PC-3 (cell line): ENCODE measurements at regions of chr1 and their contacts with region 1.

Region 1: GRCh38 chr1:39196244-39197215 is 8.0 kb upstream of the MACF1 start:
- DNase-seq: peak; percentile 72
- ATAC-seq: peak; percentile 44
- H3K4me3 ChIP-seq: peak overlapping the region; percentile 40; the same call in 1 of the 2 replicates
- H3K27ac ChIP-seq: peak overlapping the region; percentile 65
- H3K4me1 ChIP-seq: peaks cover 50% of the 10 kb centered on the region
- H3K27me3 ChIP-seq: no peaks in the 10 kb centered on the region
- CTCF ChIP-seq: no peak

Region 2: DNA sequence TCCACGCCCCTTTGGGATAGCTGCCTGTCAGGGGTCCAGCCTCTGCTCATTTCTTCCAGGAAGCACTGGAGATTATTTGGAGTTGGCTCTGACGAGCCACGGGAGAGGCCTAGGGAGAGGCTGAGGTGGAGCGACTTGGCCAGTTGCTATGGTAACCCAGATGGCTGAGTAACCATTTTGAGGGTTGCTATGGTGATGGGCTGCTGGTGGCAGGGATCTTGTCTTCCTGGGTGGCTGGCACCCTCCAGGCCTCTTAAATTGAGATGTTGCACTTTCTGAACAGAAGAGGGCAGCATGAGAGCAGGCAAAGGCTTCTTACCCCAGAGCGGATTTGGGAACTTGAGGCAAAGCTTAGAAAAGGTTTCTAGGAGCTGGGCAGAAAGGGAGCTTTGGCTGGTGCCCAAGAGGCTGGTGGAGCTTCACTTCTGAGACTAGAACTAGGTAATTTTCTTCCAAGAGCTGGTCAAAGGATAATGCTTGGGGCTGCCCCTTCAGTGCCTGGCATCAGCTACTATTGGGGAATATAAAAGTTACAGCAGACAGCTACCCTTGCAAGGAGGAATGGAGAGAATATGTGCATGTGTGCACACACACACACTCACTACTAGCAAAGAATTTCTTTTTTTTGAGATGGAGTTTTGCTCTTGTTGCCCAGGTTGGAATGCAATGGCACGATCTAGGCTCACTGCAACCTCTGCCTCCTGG is 97.8 kb before region 1 on chr1:
- CTCF ChIA-PET with region 1: interaction called, 20 read pairs
- POLR2A ChIA-PET with region 1: no interaction called
- intact Hi-C with region 1: loop called (anchors 1 kb)
- DNase-seq: peak; percentile 87
- ATAC-seq: peak; percentile 52
- H3K4me3 ChIP-seq: no peak overlapping the region
- H3K27ac ChIP-seq: no peak overlapping the region
- H3K4me1 ChIP-seq: peaks cover 26% of the 10 kb centered on the region
- H3K27me3 ChIP-seq: no peaks in the 10 kb centered on the region
- CTCF ChIP-seq: peak; percentile 91

Region 3: DNA sequence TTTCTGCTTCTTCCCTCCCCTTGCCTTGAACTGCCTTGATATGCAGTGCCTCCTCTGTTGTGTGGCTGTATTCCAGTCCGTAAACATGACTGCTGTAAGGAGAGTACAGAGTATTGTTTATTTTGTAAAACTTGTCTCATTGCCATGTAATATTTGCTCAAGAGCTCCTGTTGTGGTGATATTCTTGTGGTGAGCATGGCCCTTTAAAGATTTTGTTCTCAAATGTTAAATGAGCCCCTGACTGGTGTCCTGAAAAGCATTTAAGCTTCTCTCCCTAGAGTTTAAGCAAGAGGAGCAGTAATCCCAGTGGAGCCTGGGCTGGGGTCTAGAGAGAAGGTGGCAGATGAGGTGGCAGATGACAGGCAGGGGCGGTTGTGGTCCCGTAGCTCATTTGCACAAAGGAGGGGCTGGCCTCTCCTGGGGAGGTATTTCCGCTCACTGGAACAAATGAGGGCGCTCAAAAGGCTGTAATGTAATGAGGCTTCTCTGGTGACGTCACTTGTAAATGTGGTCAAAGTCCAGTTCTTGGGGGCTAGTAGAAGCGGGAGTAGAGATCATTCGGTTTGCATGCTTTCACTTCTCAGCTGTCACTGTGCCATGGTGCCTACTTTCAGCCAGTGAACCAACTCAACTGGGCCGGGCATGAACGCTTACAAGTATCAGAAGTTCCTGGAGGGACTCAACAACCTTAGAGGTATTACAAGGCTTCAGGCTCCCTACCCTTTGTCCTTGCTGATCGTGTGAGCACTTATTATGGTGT is 38.0 kb before region 1 on chr1:
- CTCF ChIA-PET with region 1: interaction called, 33 read pairs
- POLR2A ChIA-PET with region 1: no interaction called
- intact Hi-C with region 1: loop called (anchors 1 kb)
- DNase-seq: peak; percentile 91
- ATAC-seq: peak; percentile 65
- H3K4me3 ChIP-seq: peak overlapping the region; percentile 61
- H3K27ac ChIP-seq: peak overlapping the region; percentile 97
- H3K4me1 ChIP-seq: peaks cover 65% of the 10 kb centered on the region
- H3K27me3 ChIP-seq: no peaks in the 10 kb centered on the region
- CTCF ChIP-seq: 0 out of 2 replicates have a peak, but pooled peaks have one; percentile 30

Region 4: GRCh38 chr1:39173119-39173994 is 23.2 kb before region 1 on chr1:
- CTCF ChIA-PET with region 1: interaction called, 10 read pairs
- POLR2A ChIA-PET with region 1: interaction called, 3 read pairs
- intact Hi-C with region 1: loop called (anchors 1 kb)
- DNase-seq: no peak
- ATAC-seq: no peak
- H3K4me3 ChIP-seq: no peak overlapping the region
- H3K27ac ChIP-seq: no peak overlapping the region
- H3K4me1 ChIP-seq: peaks cover 24% of the 10 kb centered on the region
- H3K27me3 ChIP-seq: no peaks in the 10 kb centered on the region
- CTCF ChIP-seq: no peak; the same call in 1 of the 2 replicates

Region 5: GRCh38 chr1:39258146-39258924 is 61.8 kb after region 1 on chr1:
- CTCF ChIA-PET with region 1: interaction called, 50 read pairs
- POLR2A ChIA-PET with region 1: no interaction called
- intact Hi-C with region 1: loop called (anchors 1 kb)
- DNase-seq: peak; percentile 84
- ATAC-seq: peak; percentile 84
- H3K4me3 ChIP-seq: no peak overlapping the region
- H3K27ac ChIP-seq: no peak overlapping the region
- H3K4me1 ChIP-seq: no peaks in the 10 kb centered on the region
- H3K27me3 ChIP-seq: no peaks in the 10 kb centered on the region
- CTCF ChIP-seq: peak; percentile 95